GM12878 (cell line): ENCODE measurements at regions of chr2 and their contacts with region 1.

Region 1: GRCh38 chr2:20573620-20574422 is 77.1 kb downstream of the HS1BP3 start:
- DNase-seq: no peak
- ATAC-seq: no peak
- H3K4me3 ChIP-seq: no peak overlapping the region
- H3K27ac ChIP-seq: no peak overlapping the region
- H3K4me1 ChIP-seq: peaks cover 33% of the 10 kb centered on the region
- H3K27me3 ChIP-seq: no peaks in the 10 kb centered on the region
- CTCF ChIP-seq: no peak
- EP300 ChIP-seq: no peak
- POLR2A ChIP-seq: no peak
- RAD21 ChIP-seq: no peak

Region 2: GRCh38 chr2:20595431-20596192 is 21.8 kb after region 1 on chr2:
- CTCF ChIA-PET with region 1: interaction called, 26 read pairs
- POLR2A ChIA-PET with region 1: interaction called, 22 read pairs
- RAD21 ChIA-PET with region 1: interaction called, 17 read pairs
- SMC1A ChIA-PET with region 1: interaction called, 26 read pairs
- in situ Hi-C with region 1: no loop called
- intact Hi-C with region 1: loop called (anchors 1 kb)
- DNase-seq: peak; percentile 85
- ATAC-seq: peak; percentile 92
- H3K4me3 ChIP-seq: peak overlapping the region; percentile 25; the same call in 1 of the 2 replicates
- H3K27ac ChIP-seq: peak overlapping the region; percentile 79
- H3K4me1 ChIP-seq: peaks cover 38% of the 10 kb centered on the region
- H3K27me3 ChIP-seq: no peaks in the 10 kb centered on the region
- CTCF ChIP-seq: no peak
- EP300 ChIP-seq: peak; percentile 13 to 50; a peak in 3 of 4 replicates
- POLR2A ChIP-seq: peak; percentile 81
- RAD21 ChIP-seq: 0 out of 2 replicates have a peak, but pooled peaks have one; percentile 5